CD4-positive, alpha-beta T cell (primary cell): ENCODE measurements at regions of chr1 and their contacts with region 1.

Region 1: DNA sequence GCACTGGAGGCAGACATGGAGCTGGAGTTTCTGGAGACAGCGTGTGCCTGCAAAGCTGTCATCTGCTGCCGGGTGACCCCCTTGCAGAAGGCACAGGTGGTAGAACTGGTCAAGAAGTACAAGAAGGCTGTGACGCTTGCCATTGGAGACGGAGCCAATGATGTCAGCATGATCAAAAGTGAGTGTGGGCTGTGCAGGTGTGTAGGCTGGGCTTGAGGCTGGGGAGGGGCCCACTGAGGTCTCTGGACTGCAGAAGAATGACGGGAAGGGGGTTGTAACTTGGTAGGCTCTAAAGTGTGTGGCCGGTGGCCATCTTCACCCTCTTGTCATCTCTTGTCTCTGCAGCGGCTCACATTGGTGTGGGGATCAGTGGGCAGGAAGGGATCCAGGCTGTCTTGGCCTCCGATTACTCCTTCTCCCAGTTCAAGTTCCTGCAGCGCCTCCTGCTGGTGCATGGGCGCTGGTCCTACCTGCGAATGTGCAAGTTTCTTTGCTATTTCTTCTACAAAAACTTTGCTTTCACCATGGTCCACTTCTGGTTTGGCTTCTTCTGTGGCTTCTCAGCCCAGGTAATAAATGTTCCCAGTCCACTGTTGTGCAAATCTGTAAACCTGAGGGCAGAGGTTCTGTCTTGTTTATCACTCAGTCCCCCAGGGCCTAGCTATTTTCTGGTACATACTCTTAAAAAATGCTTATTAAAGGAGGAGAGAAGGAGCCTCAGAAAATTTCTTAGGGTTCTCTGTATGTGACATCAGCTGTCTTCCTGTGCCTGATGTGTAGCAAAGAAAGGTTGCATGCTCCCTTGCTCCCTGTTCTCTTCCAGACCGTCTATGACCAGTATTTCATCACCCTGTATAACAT is 19.9 kb downstream of the ATP8B2 start:
- DNase-seq: peak; percentile 66 to 89 (median 77)
- ATAC-seq: peak; percentile 41
- H3K4me3 ChIP-seq: peak overlapping the region; percentile 62
- H3K4me3 Mint-ChIP-seq: peak overlapping the region; percentile 95
- H3K27ac ChIP-seq: peak overlapping the region in 1 of 2 donors; percentile 7
- H3K27ac Mint-ChIP-seq: peak overlapping the region; percentile 89
- H3K4me1 ChIP-seq: peaks cover 91% of the 10 kb centered on the region
- H3K4me1 Mint-ChIP-seq: peaks cover 76% of the 10 kb centered on the region
- H3K27me3 ChIP-seq: no peaks in the 10 kb centered on the region
- H3K27me3 Mint-ChIP-seq: no peaks in the 10 kb centered on the region
- CTCF ChIP-seq: peak; percentile 91

Region 2: GRCh38 chr1:154198756-154199562 is 146.2 kb before region 1 on chr1:
- CTCF ChIA-PET with region 1: interaction called, 3 read pairs
- POLR2A ChIA-PET with region 1: no interaction called
- intact Hi-C with region 1: loop called in 1 of 2 experiments (anchors 2 kb)
- DNase-seq: peak in 11 of 14 experiments; percentile 5 to 81 (median 30)
- ATAC-seq: peak; percentile 90
- H3K4me3 ChIP-seq: no peak overlapping the region
- H3K4me3 Mint-ChIP-seq: no peak overlapping the region
- H3K27ac ChIP-seq: no peak overlapping the region
- H3K27ac Mint-ChIP-seq: no peak overlapping the region
- H3K4me1 ChIP-seq: peaks cover 3% of the 10 kb centered on the region
- H3K4me1 Mint-ChIP-seq: no peaks in the 10 kb centered on the region
- H3K27me3 ChIP-seq: no peaks in the 10 kb centered on the region
- H3K27me3 Mint-ChIP-seq: peaks cover 3% of the 10 kb centered on the region
- CTCF ChIP-seq: peak; percentile 71

Region 3: GRCh38 chr1:154324669-154325582 is 20.3 kb before region 1 on chr1 and contains the start of gene ATP8B2:
- CTCF ChIA-PET with region 1: interaction called, 23 read pairs
- POLR2A ChIA-PET with region 1: interaction called, 45 read pairs
- intact Hi-C with region 1: loop called (anchors 2 kb)
- DNase-seq: peak; percentile 68 to 90 (median 74)
- ATAC-seq: peak; percentile 57
- H3K4me3 ChIP-seq: peak within 1 kb of the TSS; percentile 70
- H3K4me3 Mint-ChIP-seq: peak within 1 kb of the TSS; percentile 94
- H3K27ac ChIP-seq: peak within 1 kb of the TSS; percentile 80 to 86
- H3K27ac Mint-ChIP-seq: peak within 1 kb of the TSS; percentile 90
- H3K4me1 ChIP-seq: peaks cover 52% of the 10 kb centered on the region
- H3K4me1 Mint-ChIP-seq: peaks cover 36% of the 10 kb centered on the region
- H3K27me3 ChIP-seq: no peaks in the 10 kb centered on the region
- H3K27me3 Mint-ChIP-seq: no peaks in the 10 kb centered on the region
- CTCF ChIP-seq: peak; percentile 95
- total RNA-seq, gene ATP8B2: 72.7 to 80.7 TPM

Region 4: DNA sequence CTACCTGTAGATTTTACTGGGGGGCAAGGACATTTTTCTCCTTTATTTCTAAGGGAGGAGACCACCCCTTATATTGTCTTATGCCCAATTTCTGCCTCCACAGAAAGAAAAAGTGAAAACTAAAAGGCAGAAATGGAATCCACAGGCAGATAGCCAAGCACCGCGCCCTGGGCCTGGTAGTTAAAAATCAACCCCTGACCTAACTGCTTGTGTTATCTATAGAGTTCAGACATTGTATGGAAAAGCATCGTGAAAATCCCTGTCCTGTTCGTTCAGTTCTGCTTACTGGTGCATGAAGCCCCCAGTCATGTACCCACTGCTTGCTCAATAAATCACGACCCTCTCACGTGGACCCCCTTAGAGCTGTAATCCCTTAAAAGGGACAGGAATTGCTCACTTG is 26.2 kb after region 1 on chr1:
- CTCF ChIA-PET with region 1: no interaction called
- POLR2A ChIA-PET with region 1: no interaction called
- intact Hi-C with region 1: no loop called
- DNase-seq: no peak
- ATAC-seq: no peak
- H3K4me3 ChIP-seq: no peak overlapping the region
- H3K4me3 Mint-ChIP-seq: no peak overlapping the region
- H3K27ac ChIP-seq: no peak overlapping the region
- H3K27ac Mint-ChIP-seq: no peak overlapping the region
- H3K4me1 ChIP-seq: peaks cover 5% of the 10 kb centered on the region
- H3K4me1 Mint-ChIP-seq: peaks cover 9% of the 10 kb centered on the region
- H3K27me3 ChIP-seq: no peaks in the 10 kb centered on the region
- H3K27me3 Mint-ChIP-seq: no peaks in the 10 kb centered on the region
- CTCF ChIP-seq: no peak

Region 5: GRCh38 chr1:154386643-154387352 is 41.6 kb after region 1 on chr1:
- CTCF ChIA-PET with region 1: no interaction called
- POLR2A ChIA-PET with region 1: interaction called, 4 read pairs
- intact Hi-C with region 1: loop called in 1 of 2 experiments (anchors 1 kb)
- DNase-seq: peak; percentile 43 to 93 (median 65)
- ATAC-seq: peak; percentile 85
- H3K4me3 ChIP-seq: peak overlapping the region; percentile 27
- H3K4me3 Mint-ChIP-seq: peak overlapping the region; percentile 85
- H3K27ac ChIP-seq: peak overlapping the region; percentile 86 to 88
- H3K27ac Mint-ChIP-seq: peak overlapping the region; percentile 89
- H3K4me1 ChIP-seq: peaks cover 48% of the 10 kb centered on the region
- H3K4me1 Mint-ChIP-seq: peaks cover 45% of the 10 kb centered on the region
- H3K27me3 ChIP-seq: no peaks in the 10 kb centered on the region
- H3K27me3 Mint-ChIP-seq: no peaks in the 10 kb centered on the region
- CTCF ChIP-seq: no peak

Region 6: GRCh38 chr1:154463512-154463990 is 118.3 kb after region 1 on chr1:
- CTCF ChIA-PET with region 1: no interaction called
- POLR2A ChIA-PET with region 1: interaction called, 3 read pairs
- intact Hi-C with region 1: loop called in 1 of 2 experiments (anchors 5 kb)
- DNase-seq: peak; percentile 47 to 87 (median 70)
- ATAC-seq: peak; percentile 71
- H3K4me3 ChIP-seq: no peak overlapping the region
- H3K4me3 Mint-ChIP-seq: peak overlapping the region; percentile 87
- H3K27ac ChIP-seq: peak overlapping the region; percentile 40 to 59
- H3K27ac Mint-ChIP-seq: peak overlapping the region; percentile 93
- H3K4me1 ChIP-seq: peaks cover 95% of the 10 kb centered on the region
- H3K4me1 Mint-ChIP-seq: peaks cover 82% of the 10 kb centered on the region
- H3K27me3 ChIP-seq: no peaks in the 10 kb centered on the region
- H3K27me3 Mint-ChIP-seq: no peaks in the 10 kb centered on the region
- CTCF ChIP-seq: no peak